Aorta (tissue), 5 donors: ENCODE measurements at regions of chr4 and their contacts with region 1.

Region 1: DNA sequence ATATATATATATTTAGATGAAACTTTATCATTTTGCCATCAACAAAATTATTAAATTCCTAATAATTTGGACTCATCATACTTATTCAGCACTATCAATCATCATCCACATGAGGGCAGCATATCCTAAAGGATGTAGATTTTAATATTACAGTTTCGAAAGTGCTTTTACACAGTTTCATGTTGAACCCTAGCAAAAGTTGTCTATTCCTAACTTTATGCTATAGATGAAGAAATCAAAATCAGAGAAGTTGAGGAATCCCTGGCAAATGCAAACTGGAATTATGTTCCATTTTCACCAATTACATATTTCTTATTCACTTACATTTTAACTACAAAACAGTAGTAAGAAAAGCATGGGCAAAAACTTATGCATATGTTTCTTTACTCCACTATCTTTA is 36.6 kb upstream of the UGT2A1 start:
- DNase-seq: no peak
- ATAC-seq: no peak
- H3K4me3 ChIP-seq: no peak overlapping the region
- H3K27ac ChIP-seq: no peak overlapping the region
- H3K4me1 ChIP-seq: no peaks in the 10 kb centered on the region
- H3K27me3 ChIP-seq: no peaks in the 10 kb centered on the region

Region 2: GRCh38 chr4:69881173-69881773 is 191.7 kb after region 1 on chr4:
- intact Hi-C with region 1: loop called (anchors 5 kb)
- DNase-seq: no peak
- ATAC-seq: peak; percentile 87
- H3K4me3 ChIP-seq: no peak overlapping the region
- H3K27ac ChIP-seq: no peak overlapping the region
- H3K4me1 ChIP-seq: no peaks in the 10 kb centered on the region
- H3K27me3 ChIP-seq: no peaks in the 10 kb centered on the region